ENCODE measurements at regions of chr1 and their contacts with region 1.

Region 1: DNA sequence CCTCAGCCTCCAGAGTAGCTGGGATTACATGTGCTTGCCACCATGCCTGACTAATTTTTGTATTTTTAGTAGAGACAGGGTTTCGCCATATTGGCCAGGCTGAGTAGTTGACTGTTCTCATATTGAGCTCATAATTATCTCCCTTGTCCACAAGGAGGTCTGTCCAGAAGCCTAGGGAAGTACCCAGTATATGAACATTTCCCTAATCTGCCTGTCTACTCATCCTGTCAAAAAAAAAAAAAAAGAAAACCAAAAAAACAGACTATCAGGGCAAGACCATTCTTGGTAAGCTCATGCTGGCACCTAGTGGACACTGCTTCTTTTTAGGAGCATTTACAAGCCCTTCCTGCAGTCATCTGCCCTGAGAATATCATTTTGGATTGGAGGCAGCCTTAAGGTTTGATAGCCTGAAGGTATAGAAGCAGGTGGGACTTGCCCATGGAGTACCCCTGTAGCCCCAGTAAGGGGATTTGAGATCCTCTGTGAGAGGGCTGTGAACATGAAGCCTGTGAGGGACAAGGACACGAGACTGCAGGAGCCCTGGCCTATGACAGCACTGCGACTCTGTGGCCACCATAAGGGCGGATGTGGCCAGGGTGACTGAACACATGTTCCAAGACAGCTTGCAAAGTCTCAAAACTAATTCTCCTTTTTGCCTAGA is 10.8 kb upstream of the DUSP12 start:
- DNase-seq: peak; percentile 55
- ATAC-seq: peak; percentile 70
- H3K4me3 Mint-ChIP-seq: no peak overlapping the region
- H3K27ac Mint-ChIP-seq: peak overlapping the region; percentile 88
- H3K4me1 Mint-ChIP-seq: peaks cover 45% of the 10 kb centered on the region
- H3K27me3 Mint-ChIP-seq: no peaks in the 10 kb centered on the region
- CTCF ChIP-seq: no peak

Region 2: GRCh38 chr1:161399257-161399998 is 339.3 kb before region 1 on chr1:
- CTCF ChIA-PET with region 1: no interaction called
- POLR2A ChIA-PET with region 1: no interaction called
- intact Hi-C with region 1: loop called (anchors 5 kb)
- DNase-seq: peak; percentile 93
- ATAC-seq: peak; percentile 81
- H3K4me3 Mint-ChIP-seq: peak overlapping the region; percentile 95
- H3K27ac Mint-ChIP-seq: peak overlapping the region; percentile 99
- H3K4me1 Mint-ChIP-seq: peaks cover 30% of the 10 kb centered on the region
- H3K27me3 Mint-ChIP-seq: no peaks in the 10 kb centered on the region
- CTCF ChIP-seq: no peak

Region 3: GRCh38 chr1:161531986-161532643 is 206.6 kb before region 1 on chr1:
- CTCF ChIA-PET with region 1: interaction called, 8 read pairs
- POLR2A ChIA-PET with region 1: no interaction called
- intact Hi-C with region 1: loop called (anchors 1 kb)
- DNase-seq: no peak
- ATAC-seq: no peak
- H3K4me3 Mint-ChIP-seq: peak overlapping the region; percentile 35
- H3K27ac Mint-ChIP-seq: no peak overlapping the region
- H3K4me1 Mint-ChIP-seq: peaks cover 22% of the 10 kb centered on the region
- H3K27me3 Mint-ChIP-seq: peaks cover 5% of the 10 kb centered on the region
- CTCF ChIP-seq: no peak

Region 4: GRCh38 chr1:161706482-161707347 is 32.0 kb before region 1 on chr1 and contains the start of gene FCRLA:
- CTCF ChIA-PET with region 1: interaction called, 56 read pairs
- POLR2A ChIA-PET with region 1: interaction called, 80 read pairs
- intact Hi-C with region 1: loop called (anchors 1 kb)
- DNase-seq: no peak
- ATAC-seq: peak; percentile 53
- H3K4me3 Mint-ChIP-seq: no peak within 1 kb of the TSS
- H3K27ac Mint-ChIP-seq: no peak within 1 kb of the TSS
- H3K4me1 Mint-ChIP-seq: peaks cover 28% of the 10 kb centered on the region
- H3K27me3 Mint-ChIP-seq: no peaks in the 10 kb centered on the region
- CTCF ChIP-seq: no peak
- total RNA-seq, gene FCRLA: 175 and 178 TPM in 2 replicates

Region 5: DNA sequence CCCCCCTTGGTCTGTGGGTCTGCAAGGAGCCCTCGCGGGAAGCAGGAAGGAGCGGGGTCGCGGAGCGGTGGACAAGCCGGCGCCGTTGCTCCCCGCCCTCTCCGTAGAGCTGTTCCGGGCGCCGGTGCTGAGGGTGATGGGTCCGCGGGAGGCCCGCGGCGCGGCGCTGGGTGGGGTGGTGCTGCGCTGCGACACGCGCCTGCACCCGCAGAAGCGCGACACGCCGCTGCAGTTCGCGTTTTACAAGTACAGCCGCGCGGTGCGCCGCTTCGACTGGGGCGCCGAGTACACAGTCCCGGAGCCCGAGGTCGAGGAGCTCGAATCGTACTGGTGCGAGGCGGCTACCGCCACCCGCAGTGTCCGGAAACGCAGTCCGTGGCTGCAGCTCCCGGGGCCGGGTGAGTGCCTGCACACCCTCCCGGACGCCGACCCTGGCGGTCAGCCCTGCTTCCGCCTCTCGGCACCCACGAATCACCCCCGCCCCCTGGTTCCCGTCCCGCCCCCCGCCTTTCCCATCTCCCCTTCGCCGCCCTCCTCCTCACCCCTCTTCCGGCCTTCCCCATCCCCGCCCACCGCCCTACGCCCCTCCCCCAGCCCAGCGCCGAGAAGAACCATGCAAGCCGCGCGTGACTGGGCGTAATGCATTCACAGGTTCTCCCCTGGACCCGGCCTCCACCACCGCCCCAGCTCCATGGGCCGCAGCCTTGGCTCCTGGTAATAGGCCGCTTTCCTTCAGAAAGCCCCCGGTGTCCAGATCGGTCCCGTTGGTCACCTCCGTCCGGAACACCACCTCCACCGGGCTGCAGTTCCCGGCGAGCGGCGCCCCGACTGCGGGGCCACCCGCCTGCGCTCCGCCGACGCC is 11.9 kb before region 1 on chr1:
- CTCF ChIA-PET with region 1: interaction called, 57 read pairs
- POLR2A ChIA-PET with region 1: interaction called, 144 read pairs
- intact Hi-C with region 1: loop called (anchors 1 kb)
- DNase-seq: peak; percentile 70
- ATAC-seq: peak; percentile 72
- H3K4me3 Mint-ChIP-seq: peak overlapping the region; percentile 96
- H3K27ac Mint-ChIP-seq: peak overlapping the region; percentile 94
- H3K4me1 Mint-ChIP-seq: peaks cover 61% of the 10 kb centered on the region
- H3K27me3 Mint-ChIP-seq: no peaks in the 10 kb centered on the region
- CTCF ChIP-seq: no peak

Region 6: DNA sequence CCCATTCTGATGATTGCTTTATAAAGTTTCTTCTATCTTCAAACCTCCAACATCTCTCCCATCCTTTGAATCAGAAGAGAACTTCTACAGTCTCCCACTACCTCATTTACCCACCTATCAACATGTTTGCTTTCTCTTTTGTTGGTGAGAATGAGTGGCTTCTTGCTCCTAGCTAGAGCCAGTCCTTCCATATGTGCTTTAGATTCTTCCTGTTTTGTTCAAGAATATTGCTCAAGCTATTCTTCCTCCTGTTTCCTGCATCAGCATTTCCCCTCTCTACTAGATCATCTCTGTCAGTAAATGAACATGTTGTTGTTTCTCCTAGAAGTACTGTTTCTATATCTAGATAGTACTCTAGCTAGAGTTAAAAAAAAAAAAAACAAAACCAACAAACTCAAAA is 33.6 kb after region 1 on chr1:
- CTCF ChIA-PET with region 1: no interaction called
- POLR2A ChIA-PET with region 1: no interaction called
- intact Hi-C with region 1: no loop called
- DNase-seq: no peak
- ATAC-seq: no peak
- H3K4me3 Mint-ChIP-seq: no peak overlapping the region
- H3K27ac Mint-ChIP-seq: no peak overlapping the region
- H3K4me1 Mint-ChIP-seq: peaks cover 29% of the 10 kb centered on the region
- H3K27me3 Mint-ChIP-seq: no peaks in the 10 kb centered on the region
- CTCF ChIP-seq: no peak